Activated T-helper 2 cell treated with anti-CD3 and anti-CD28 coated beads, Interferon-gamma antibody, Interleukin-2, Interleukin-4, amounts not matched to agents 10 μg/mL and 5 μg/mL and 100 μg/mL, durations not matched to agents 14 hours and 24 hours and 36 hours (primary cell): ENCODE measurements at regions of chr17 and their contacts with region 1.

Region 1: GRCh38 chr17:50311112-50311460 is 34.8 kb upstream of the XYLT2 start:
- DNase-seq: no peak
- H3K4me3 Mint-ChIP-seq: no peak overlapping the region
- H3K27ac Mint-ChIP-seq: peak overlapping the region; percentile 99
- H3K4me1 Mint-ChIP-seq: peaks cover 57% of the 10 kb centered on the region
- H3K27me3 Mint-ChIP-seq: no peaks in the 10 kb centered on the region

Region 2: GRCh38 chr17:50331085-50331791 is 20.2 kb after region 1 on chr17:
- intact Hi-C with region 1: loop called (anchors 1 kb)
- DNase-seq: no peak
- H3K4me3 Mint-ChIP-seq: no peak overlapping the region
- H3K27ac Mint-ChIP-seq: peak overlapping the region; percentile 93
- H3K4me1 Mint-ChIP-seq: peaks cover 39% of the 10 kb centered on the region
- H3K27me3 Mint-ChIP-seq: no peaks in the 10 kb centered on the region